Lower leg skin (tissue), 4 donors: ENCODE measurements at regions of chr19 and their contacts with region 1.

Region 1: GRCh38 chr19:45757691-45758090 is 11.4 kb downstream of the SIX5 start:
- DNase-seq: no peak
- H3K4me3 ChIP-seq: no peak overlapping the region
- CTCF ChIP-seq: no peak
- POLR2A ChIP-seq: no peak

Region 2: DNA sequence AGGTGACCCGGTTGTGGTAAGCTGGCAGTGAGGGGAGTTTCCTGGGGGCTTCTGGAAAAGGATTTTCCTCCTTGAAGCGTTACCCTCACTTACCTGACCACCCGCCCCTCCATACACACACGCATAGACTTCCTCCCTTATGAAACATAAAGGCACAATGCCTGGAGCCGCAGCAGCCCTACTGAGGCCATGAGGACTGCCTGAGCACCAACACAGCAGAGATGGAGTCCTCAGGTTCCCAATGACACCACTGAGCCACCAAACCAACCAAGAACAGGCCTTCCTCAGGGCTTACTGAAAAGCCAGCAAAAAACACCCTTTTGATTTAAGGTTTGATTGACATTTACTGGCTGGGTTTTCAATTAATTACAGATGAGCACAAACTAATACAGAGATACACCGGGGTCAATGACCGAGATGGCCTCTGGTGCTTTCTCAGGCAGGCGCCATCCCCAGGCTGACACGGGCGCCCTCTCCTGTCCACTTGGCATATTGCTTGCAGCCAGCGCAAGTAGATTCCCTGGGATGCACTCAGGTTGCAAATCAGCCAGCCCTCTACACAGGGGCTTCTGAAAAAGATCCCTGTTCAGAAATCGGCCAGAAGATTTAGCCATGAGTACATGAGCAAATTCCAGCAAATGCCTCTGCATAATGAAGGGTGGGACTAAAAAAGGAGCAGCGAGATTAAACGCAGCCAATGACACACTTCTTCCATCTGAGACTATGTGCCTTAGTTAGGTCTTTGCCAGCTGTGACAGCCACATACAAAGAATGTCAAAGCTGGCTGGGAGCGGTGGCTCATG is 187.9 kb before region 1 on chr19:
- intact Hi-C with region 1: no loop called
- DNase-seq: peak in 1 of 2 donors; percentile 89
- H3K4me3 ChIP-seq: no peak overlapping the region
- CTCF ChIP-seq: no peak
- POLR2A ChIP-seq: no peak

Region 3: DNA sequence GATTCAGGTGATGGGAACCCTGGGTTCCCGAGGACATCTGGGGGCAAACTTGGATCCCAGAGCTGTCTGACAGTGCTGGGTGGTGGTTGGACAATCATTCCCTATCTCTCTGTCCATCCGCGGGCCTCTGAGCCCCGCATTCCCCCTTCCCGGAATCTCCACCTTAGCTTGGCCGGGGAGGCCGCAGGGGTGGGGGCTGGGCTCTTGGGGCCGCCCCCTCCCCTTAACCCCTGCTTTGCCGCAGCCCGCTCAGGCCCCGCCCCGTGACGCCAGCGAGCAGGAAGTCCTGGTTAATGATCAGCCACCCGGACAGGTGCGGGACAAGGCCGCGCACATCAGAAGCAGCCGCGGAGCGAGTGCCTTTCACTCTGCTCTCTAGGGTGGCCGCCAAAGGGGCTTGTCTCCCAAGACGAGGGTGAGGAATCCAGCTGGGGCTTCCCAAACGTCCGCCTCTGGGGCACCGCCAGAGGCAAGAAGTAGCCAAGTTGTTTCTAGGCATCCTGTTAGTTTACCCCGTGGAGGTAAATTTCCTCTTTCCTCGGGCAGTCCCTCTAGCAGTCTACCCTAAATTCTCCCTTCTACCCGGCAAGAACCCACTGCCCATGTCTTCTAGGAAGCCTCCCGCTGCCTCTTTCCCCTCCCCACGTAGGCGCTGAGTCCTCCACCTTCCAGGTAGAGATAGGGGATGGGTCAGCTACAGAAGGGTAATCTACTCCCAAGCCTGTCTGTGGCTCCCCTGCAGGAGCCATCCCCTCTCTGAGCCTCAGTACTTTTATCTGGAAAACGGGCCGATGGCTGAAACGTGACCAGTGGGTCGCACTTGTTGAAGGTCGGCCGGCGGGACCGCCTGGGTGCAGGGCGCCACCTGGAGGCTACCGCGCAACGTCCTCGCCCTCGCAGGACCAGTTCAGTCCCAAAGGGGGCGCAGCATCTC is 125.2 kb after region 1 on chr19:
- intact Hi-C with region 1: no loop called
- DNase-seq: peak; percentile 60 to 95
- H3K4me3 ChIP-seq: no peak overlapping the region
- CTCF ChIP-seq: peak in 1 of 3 donors; percentile 79
- POLR2A ChIP-seq: no peak

Region 4: DNA sequence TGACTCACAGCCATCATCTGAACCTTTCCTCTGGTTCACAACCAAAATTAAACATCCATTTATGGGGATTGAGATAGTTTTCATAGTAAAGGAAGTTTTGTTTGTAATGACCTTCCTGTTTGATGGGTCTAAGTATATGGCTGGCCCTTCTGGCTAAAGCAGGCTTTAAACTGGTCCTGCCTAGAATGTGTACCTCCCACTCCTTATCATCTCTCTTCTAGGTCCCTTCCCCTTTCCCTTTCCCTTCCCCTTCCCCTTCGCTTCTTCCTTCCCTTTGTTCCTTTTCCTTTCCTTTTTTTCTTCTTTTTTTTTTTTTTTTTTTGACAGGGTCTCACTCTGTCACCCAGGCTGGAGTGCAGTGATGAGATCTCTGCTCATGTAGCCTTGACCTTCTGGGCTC is 1437.7 kb after region 1 on chr19:
- intact Hi-C with region 1: loop called (anchors 5 kb)
- DNase-seq: no peak
- H3K4me3 ChIP-seq: no peak overlapping the region
- CTCF ChIP-seq: no peak
- POLR2A ChIP-seq: no peak